ENCODE measurements at regions of chr2 and their contacts with region 1.

Region 1: GRCh38 chr2:239401067-239401880 is 454 bp upstream of the HDAC4 start:
- DNase-seq: peak; percentile 99
- H3K4me3 Mint-ChIP-seq: peak overlapping the region; percentile 87
- H3K27ac Mint-ChIP-seq: peak overlapping the region; percentile 95
- H3K4me1 Mint-ChIP-seq: peaks cover 41% of the 10 kb centered on the region
- H3K27me3 Mint-ChIP-seq: no peaks in the 10 kb centered on the region

Region 2: GRCh38 chr2:239216614-239217273 is 184.5 kb before region 1 on chr2:
- CTCF ChIA-PET with region 1: no interaction called
- intact Hi-C with region 1: loop called (anchors 1 kb)
- DNase-seq: peak; percentile 72
- H3K4me3 Mint-ChIP-seq: peak overlapping the region; percentile 69
- H3K27ac Mint-ChIP-seq: peak overlapping the region; percentile 87
- H3K4me1 Mint-ChIP-seq: peaks cover 71% of the 10 kb centered on the region
- H3K27me3 Mint-ChIP-seq: no peaks in the 10 kb centered on the region

Region 3: GRCh38 chr2:239288951-239289511 is 112.2 kb before region 1 on chr2:
- CTCF ChIA-PET with region 1: no interaction called
- intact Hi-C with region 1: loop called (anchors 2 kb)
- DNase-seq: peak; percentile 68
- H3K4me3 Mint-ChIP-seq: peak overlapping the region; percentile 45
- H3K27ac Mint-ChIP-seq: peak overlapping the region; percentile 86
- H3K4me1 Mint-ChIP-seq: peaks cover 76% of the 10 kb centered on the region
- H3K27me3 Mint-ChIP-seq: peaks cover 13% of the 10 kb centered on the region

Region 4: GRCh38 chr2:239380831-239381708 is 20.2 kb before region 1 on chr2:
- CTCF ChIA-PET with region 1: interaction called, 5 read pairs
- intact Hi-C with region 1: loop called (anchors 1 kb)
- DNase-seq: peak; percentile 85
- H3K4me3 Mint-ChIP-seq: peak overlapping the region; percentile 73
- H3K27ac Mint-ChIP-seq: peak overlapping the region; percentile 95
- H3K4me1 Mint-ChIP-seq: peaks cover 44% of the 10 kb centered on the region
- H3K27me3 Mint-ChIP-seq: no peaks in the 10 kb centered on the region

Region 5: DNA sequence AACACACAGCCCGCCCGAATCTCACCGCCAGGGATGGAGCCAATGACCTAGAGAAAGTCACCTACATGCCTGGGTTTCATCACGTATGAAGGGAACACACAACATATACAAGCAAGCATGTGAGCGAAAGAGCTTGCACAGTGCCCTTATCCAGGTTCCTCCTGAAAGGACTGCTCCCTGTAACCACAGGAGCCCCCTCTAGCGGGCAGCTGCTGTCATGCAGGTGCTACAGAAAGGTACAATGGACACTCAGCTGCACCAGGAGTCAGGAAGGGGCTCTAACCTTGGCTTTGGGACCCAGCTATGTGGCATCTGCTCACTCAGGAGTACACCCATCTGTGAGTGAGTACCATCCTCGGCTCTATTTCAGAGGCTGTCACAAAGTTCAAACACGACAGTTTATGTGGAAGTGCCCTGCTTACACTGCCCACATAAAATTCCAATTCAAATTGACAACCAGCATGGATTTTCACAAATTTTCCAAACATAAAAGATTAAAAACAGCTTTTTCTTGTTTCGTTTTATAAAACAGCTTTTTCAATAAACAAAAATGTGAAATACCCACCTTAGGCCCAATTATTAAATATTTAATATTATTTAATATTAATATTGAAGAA is 620.3 kb after region 1 on chr2:
- CTCF ChIA-PET with region 1: no interaction called
- intact Hi-C with region 1: loop called (anchors 1 kb)
- DNase-seq: peak; percentile 79
- H3K4me3 Mint-ChIP-seq: no peak overlapping the region
- H3K27ac Mint-ChIP-seq: no peak overlapping the region
- H3K4me1 Mint-ChIP-seq: peaks cover 23% of the 10 kb centered on the region
- H3K27me3 Mint-ChIP-seq: no peaks in the 10 kb centered on the region

Measured in activated naive CD4-positive, alpha-beta T cell treated with anti-CD3 and anti-CD28 coated beads for 36 hours (primary cell).